Upper lobe of right lung (tissue), 1 donor: ENCODE measurements at regions of chr2 and their contacts with region 1.

Region 1: GRCh38 chr2:45643543-45644542 is 7.6 kb upstream of the PRKCE start:
- DNase-seq: peak; percentile 88
- ATAC-seq: peak; percentile 99
- H3K4me3 ChIP-seq: peak overlapping the region; percentile 58
- H3K27ac ChIP-seq: no peak overlapping the region
- H3K4me1 ChIP-seq: peaks cover 2% of the 10 kb centered on the region
- H3K27me3 ChIP-seq: no peaks in the 10 kb centered on the region
- CTCF ChIP-seq: peak; percentile 94

Region 2: DNA sequence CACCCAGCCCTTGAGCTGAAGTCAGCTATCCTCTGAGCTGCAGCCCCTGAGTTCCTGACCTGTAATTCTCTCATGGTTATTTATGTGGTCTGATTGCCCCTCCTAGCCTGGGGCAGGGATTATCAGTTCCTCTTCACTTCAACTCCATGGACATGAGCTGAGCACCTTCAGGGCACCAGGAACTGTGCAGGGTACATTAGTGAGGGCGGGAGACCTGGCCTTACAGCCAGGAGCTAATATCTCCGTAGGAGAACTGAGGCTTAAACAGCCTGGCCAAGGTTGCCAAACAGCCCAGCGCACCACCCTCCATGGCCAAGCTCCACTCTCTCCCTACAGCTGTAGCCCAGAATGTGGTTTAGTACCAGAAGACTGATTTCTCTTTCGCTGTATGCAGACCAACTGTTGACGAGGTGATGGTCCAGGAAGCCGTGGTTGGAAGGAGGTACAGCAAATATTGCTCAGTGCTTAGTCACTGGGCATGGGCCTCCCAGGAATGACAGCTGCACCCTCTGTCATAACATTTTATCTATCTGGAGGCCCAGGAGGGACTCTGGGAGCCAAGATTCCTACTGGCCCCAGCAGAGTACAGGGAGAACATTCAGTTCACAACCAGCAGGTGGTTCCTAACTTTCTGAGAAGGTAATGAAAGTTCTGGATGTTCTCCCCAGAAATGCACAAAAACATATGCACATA is 405.8 kb before region 1 on chr2:
- intact Hi-C with region 1: no loop called
- DNase-seq: no peak
- ATAC-seq: peak; percentile 24
- H3K4me3 ChIP-seq: no peak overlapping the region
- H3K27ac ChIP-seq: no peak overlapping the region
- H3K4me1 ChIP-seq: peaks cover 4% of the 10 kb centered on the region
- H3K27me3 ChIP-seq: no peaks in the 10 kb centered on the region
- CTCF ChIP-seq: no peak

Region 3: DNA sequence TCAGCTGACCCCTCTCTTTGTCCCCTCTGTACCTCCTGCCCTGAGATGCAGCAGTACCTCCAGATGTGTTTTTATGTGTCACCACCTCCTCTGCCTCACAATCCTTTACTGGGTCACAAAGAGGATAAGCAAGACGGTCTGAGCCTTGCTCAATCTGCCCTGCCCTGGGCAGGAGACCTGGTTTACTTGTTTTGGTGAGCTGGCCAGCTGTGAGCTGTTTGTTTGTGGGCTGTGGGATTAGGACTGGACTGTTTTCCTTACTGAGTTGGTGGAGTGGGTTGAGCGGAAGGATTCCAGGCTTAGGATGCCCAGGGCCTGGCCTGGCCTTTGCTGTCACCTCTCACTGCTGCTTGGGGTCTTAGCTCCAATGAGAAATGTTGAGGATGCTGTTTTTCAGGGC is 332.3 kb before region 1 on chr2:
- intact Hi-C with region 1: no loop called
- DNase-seq: no peak
- ATAC-seq: no peak
- H3K4me3 ChIP-seq: no peak overlapping the region
- H3K27ac ChIP-seq: no peak overlapping the region
- H3K4me1 ChIP-seq: no peaks in the 10 kb centered on the region
- H3K27me3 ChIP-seq: no peaks in the 10 kb centered on the region
- CTCF ChIP-seq: no peak

Region 4: DNA sequence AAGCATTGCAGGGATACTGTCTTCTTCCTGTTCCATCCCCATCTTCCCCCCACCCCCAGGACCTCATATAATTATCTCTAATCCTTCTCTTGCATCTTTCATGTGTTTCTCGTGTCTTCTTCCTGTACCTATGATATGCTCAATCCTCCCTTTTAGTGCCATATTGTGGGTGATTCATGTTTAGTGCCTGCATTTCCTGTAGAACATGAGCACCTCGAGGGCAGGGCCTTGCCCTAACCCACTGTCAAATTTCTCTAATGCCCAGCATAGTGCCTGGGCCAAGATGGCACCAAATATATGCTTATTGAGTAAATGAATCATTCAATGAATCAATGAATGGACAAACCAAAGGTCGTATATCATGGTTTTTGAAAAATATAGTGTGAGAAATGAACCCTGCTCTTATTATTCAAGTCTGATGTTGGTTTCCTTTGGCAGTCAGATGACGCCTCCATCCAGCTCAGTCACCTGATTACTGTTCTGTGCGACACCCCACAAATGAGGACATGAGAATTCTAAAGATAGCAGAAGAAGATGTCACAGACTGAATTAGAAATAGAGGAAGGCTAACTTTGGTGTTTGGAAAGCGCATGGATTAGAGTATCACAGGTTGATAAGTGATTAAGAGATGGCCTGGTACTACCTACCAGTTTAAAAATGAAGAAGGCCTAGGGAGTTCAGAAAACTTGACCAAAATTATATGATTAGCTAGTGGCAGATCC is 286.0 kb after region 1 on chr2:
- intact Hi-C with region 1: loop called (anchors 5 kb)
- DNase-seq: no peak
- ATAC-seq: peak; percentile 78
- H3K4me3 ChIP-seq: no peak overlapping the region
- H3K27ac ChIP-seq: peak overlapping the region; percentile 38
- H3K4me1 ChIP-seq: peaks cover 7% of the 10 kb centered on the region
- H3K27me3 ChIP-seq: no peaks in the 10 kb centered on the region
- CTCF ChIP-seq: no peak